ENCODE measurements at regions of chr15 and their contacts with region 1.

Region 1: DNA sequence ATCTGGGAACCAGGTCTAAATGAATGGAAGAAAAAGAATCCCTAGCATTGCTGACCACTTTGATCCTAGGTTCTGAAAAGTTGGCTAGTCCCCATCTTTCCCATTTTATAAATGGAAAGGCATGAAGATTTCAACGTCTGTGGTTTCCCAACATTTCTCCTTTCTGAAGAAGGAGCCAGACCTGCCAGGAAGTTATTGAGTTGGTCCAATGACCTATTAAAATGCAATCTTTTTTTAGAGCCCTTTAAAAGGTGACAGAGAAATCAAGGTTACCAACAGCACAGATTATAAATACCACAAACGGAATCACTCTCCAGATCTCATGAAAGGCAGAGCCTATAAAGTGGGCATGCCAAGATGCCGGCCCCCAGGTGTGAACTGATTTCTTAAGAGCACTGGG is 505.6 kb upstream of the THBS1 start:
- DNase-seq: no peak
- ATAC-seq: no peak
- H3K4me3 ChIP-seq: no peak overlapping the region
- H3K27ac ChIP-seq: no peak overlapping the region
- H3K4me1 ChIP-seq: no peaks in the 10 kb centered on the region
- H3K27me3 ChIP-seq: no peaks in the 10 kb centered on the region
- CTCF ChIP-seq: no peak
- EP300 ChIP-seq: no peak
- POLR2A ChIP-seq: no peak
- RAD21 ChIP-seq: no peak

Region 2: DNA sequence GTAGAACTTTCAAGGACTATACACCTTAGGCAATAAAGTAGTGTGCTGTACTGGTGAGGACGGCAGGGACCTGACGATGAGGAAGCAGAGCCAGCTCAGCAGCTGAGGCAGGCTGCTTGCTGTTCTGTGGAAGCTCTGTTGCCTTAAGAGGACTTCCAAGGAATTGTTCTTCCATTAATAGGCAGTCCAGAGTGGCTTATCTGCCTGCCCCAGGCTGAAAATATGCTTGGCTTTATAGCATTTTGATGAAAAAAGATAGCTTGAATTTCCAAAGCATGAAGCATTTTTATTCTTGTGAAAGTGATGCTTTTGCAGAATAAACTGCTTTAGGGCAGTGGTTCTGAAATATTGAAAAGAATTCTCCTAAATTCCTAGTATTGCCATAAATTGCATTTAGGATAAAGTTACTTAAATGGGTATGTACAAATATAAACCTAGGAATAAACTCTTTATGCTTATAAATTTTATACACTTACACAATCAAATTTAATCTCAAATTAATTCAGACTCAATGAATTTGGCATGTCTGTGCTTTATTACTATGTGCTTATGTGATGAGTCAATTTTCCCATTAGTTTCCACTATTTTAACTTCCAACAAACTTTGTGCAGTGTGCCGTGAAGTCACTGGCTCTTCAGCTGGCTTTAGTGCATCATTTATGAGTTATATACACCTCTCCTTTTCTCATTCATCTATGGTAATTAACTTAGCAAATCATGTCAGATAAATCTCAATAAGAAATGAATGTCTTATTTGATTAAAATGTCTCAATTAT is 279.7 kb before region 1 on chr15:
- CTCF ChIA-PET with region 1: no interaction called
- POLR2A ChIA-PET with region 1: no interaction called
- RAD21 ChIA-PET with region 1: no interaction called
- SMC1A ChIA-PET with region 1: no interaction called
- in situ Hi-C with region 1: no loop called
- intact Hi-C with region 1: no loop called
- DNase-seq: no peak
- ATAC-seq: no peak
- H3K4me3 ChIP-seq: no peak overlapping the region
- H3K27ac ChIP-seq: no peak overlapping the region
- H3K4me1 ChIP-seq: no peaks in the 10 kb centered on the region
- H3K27me3 ChIP-seq: no peaks in the 10 kb centered on the region; a peak in 2 of 4 replicates
- CTCF ChIP-seq: no peak
- EP300 ChIP-seq: no peak
- POLR2A ChIP-seq: no peak
- RAD21 ChIP-seq: no peak

Region 3: GRCh38 chr15:39054128-39054732 is 21.1 kb before region 1 on chr15:
- CTCF ChIA-PET with region 1: no interaction called
- POLR2A ChIA-PET with region 1: no interaction called
- RAD21 ChIA-PET with region 1: no interaction called
- SMC1A ChIA-PET with region 1: no interaction called
- in situ Hi-C with region 1: no loop called
- intact Hi-C with region 1: loop called (anchors 1 kb)
- DNase-seq: no peak
- ATAC-seq: no peak
- H3K4me3 ChIP-seq: no peak overlapping the region
- H3K27ac ChIP-seq: no peak overlapping the region
- H3K4me1 ChIP-seq: no peaks in the 10 kb centered on the region
- H3K27me3 ChIP-seq: no peaks in the 10 kb centered on the region
- CTCF ChIP-seq: no peak
- EP300 ChIP-seq: no peak
- POLR2A ChIP-seq: no peak
- RAD21 ChIP-seq: no peak